HepG2 (cell line): ENCODE measurements at regions of chr15 and their contacts with region 1.

Region 1: DNA sequence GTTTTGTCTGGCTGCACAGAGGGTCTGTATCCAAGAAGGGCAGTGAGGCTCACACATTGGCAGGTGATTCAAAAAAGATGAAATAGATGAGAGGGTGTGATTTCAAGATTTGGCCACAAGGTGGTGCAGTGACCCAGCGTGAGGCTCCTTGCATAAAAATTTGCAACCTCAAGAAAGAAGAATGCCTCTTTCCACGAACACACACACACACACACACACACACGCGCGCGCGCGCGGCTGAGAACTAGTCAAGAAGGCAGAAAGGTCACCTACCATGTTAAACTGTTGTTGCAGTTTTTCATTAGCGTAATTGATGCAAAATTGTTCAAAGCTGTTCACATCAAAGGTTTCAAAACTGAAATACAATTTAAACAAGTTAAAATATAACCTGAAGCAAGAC is 39.2 kb downstream of the MYO5C start:
- DNase-seq: peak; percentile 45
- ATAC-seq: peak; percentile 38; the same call in 2 of the 3 replicates
- H3K4me3 ChIP-seq: no peak overlapping the region
- H3K27ac ChIP-seq: no peak overlapping the region
- H3K4me1 ChIP-seq: 0 out of 2 replicates have a peak, but pooled peaks cover under 1% of the 10 kb centered on the region
- H3K27me3 ChIP-seq: no peaks in the 10 kb centered on the region
- CTCF ChIP-seq: peak; percentile 82
- EP300 ChIP-seq: no peak
- POLR2A ChIP-seq: no peak
- RAD21 ChIP-seq: peak; percentile 86

Region 2: GRCh38 chr15:51982013-51982769 is 274.2 kb before region 1 on chr15:
- CTCF ChIA-PET with region 1: no interaction called
- POLR2A ChIA-PET with region 1: no interaction called
- in situ Hi-C with region 1: no loop called
- intact Hi-C with region 1: no loop called
- DNase-seq: peak; percentile 75
- ATAC-seq: peak; percentile 91
- H3K4me3 ChIP-seq: peak overlapping the region; percentile 28 to 45 (median 38)
- H3K27ac ChIP-seq: peak overlapping the region; percentile 74
- H3K4me1 ChIP-seq: peaks cover 40% of the 10 kb centered on the region
- H3K27me3 ChIP-seq: no peaks in the 10 kb centered on the region
- CTCF ChIP-seq: peak; percentile 82
- EP300 ChIP-seq: no peak
- POLR2A ChIP-seq: peak in 1 of 2 experiments; percentile 53; a peak in 2 of 4 replicates
- RAD21 ChIP-seq: peak; percentile 76

Region 3: DNA sequence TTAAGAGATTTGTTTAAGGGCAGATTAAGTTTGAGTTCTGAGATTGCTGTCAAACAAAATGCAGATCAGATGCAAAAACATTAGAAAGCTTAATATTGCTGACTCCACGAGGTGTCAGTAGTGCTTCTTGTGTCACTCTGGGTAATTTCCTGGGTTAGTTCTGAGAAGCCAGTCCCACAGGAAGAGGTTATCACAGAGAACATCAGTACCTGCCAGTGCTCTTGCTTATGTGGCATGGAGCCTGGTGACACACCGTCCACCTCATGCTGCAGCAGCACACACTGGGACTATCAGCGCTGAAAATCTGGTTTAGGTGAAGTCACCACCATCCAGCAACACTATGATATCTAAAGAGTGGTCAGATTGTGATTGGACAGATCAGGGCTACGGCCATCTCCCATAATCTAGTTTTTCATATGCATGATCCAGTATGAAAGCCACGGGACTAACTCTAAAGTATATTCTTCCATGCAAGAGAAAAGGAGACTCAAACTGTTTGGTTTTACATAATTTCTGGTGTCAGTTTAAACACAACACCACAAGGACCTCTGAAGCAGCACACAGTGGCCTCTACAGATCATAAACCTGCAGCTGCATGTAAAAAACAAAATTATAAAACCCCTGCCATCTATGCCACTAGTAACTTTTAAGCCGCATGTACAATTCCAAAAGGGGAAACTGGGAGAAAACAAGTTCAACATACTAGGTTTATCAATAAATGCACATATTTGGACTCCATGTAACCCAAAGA is 75.3 kb after region 1 on chr15:
- CTCF ChIA-PET with region 1: interaction called, 3 read pairs
- POLR2A ChIA-PET with region 1: no interaction called
- in situ Hi-C with region 1: loop called (anchors 5 kb)
- intact Hi-C with region 1: loop called (anchors 2 kb)
- DNase-seq: peak; percentile 30
- ATAC-seq: peak; percentile 73
- H3K4me3 ChIP-seq: no peak overlapping the region
- H3K27ac ChIP-seq: no peak overlapping the region
- H3K4me1 ChIP-seq: peaks cover 19% of the 10 kb centered on the region
- H3K27me3 ChIP-seq: no peaks in the 10 kb centered on the region
- CTCF ChIP-seq: peak; percentile 66
- EP300 ChIP-seq: no peak
- POLR2A ChIP-seq: no peak
- RAD21 ChIP-seq: no peak

Region 4: GRCh38 chr15:52343831-52344230 is 87.5 kb after region 1 on chr15:
- CTCF ChIA-PET with region 1: no interaction called
- POLR2A ChIA-PET with region 1: no interaction called
- in situ Hi-C with region 1: no loop called
- intact Hi-C with region 1: no loop called
- DNase-seq: no peak
- ATAC-seq: no peak
- H3K4me3 ChIP-seq: no peak overlapping the region
- H3K27ac ChIP-seq: no peak overlapping the region
- H3K4me1 ChIP-seq: peaks cover 21% of the 10 kb centered on the region
- H3K27me3 ChIP-seq: no peaks in the 10 kb centered on the region
- CTCF ChIP-seq: no peak
- EP300 ChIP-seq: no peak
- POLR2A ChIP-seq: no peak
- RAD21 ChIP-seq: no peak

Region 5: GRCh38 chr15:52463638-52464037 is 207.3 kb after region 1 on chr15:
- CTCF ChIA-PET with region 1: no interaction called
- POLR2A ChIA-PET with region 1: no interaction called
- in situ Hi-C with region 1: no loop called
- intact Hi-C with region 1: loop called (anchors 2 kb)
- DNase-seq: no peak
- ATAC-seq: no peak
- H3K4me3 ChIP-seq: no peak overlapping the region
- H3K27ac ChIP-seq: no peak overlapping the region
- H3K4me1 ChIP-seq: no peaks in the 10 kb centered on the region
- H3K27me3 ChIP-seq: no peaks in the 10 kb centered on the region
- CTCF ChIP-seq: peak; percentile 35
- EP300 ChIP-seq: no peak
- POLR2A ChIP-seq: no peak
- RAD21 ChIP-seq: no peak

Region 6: GRCh38 chr15:52730173-52730572 is 473.8 kb after region 1 on chr15:
- CTCF ChIA-PET with region 1: interaction called, 25 read pairs
- POLR2A ChIA-PET with region 1: no interaction called
- in situ Hi-C with region 1: loop called (anchors 5 kb)
- intact Hi-C with region 1: no loop called
- DNase-seq: no peak
- ATAC-seq: no peak
- H3K4me3 ChIP-seq: no peak overlapping the region
- H3K27ac ChIP-seq: no peak overlapping the region
- H3K4me1 ChIP-seq: peaks cover 37% of the 10 kb centered on the region
- H3K27me3 ChIP-seq: no peaks in the 10 kb centered on the region; a peak in 1 of 5 replicates
- CTCF ChIP-seq: no peak
- EP300 ChIP-seq: no peak
- POLR2A ChIP-seq: no peak
- RAD21 ChIP-seq: no peak